ENCODE measurements at regions of chr19 and their contacts with region 1.

Region 1: DNA sequence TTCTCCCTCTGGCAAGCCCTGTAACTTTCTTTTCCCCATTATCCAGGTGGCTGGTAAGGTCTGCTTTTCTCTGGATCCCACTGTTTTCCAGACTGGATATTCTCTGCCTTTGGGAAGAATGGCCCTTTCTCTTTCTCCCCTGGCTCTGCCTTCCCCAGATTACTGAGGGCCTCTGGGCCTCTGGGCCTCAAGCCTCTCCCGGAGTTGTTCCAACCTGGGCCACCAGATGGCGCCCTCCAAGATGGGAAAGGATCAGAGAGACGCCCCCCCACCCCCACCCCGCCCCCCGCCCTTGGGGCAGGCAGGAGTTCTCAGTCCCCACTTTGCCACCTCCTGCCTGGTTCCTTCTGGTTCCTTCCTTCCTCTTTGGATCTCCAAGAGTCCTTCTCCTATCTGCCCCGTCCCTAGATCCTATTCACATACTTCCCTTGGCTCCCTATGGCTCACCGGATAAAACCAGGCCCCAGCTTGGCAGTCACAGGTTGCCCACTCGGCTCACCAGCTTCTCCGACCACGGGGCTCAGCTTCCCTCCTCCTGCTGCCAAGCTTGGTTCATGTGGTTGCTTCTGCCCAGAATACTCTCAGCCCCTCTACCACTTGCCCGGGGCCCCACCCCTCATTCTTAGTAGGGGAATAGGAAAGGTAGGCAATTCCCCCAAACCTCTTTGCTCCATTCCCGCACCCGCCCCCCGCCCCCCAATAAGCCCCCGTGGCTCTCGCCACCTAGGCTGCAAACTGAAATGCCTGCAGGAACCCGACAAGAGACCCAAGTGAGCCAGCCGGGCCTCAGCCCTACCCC is 13.1 kb downstream of the EPS8L1 start:
- DNase-seq: peak; percentile 64 to 79 (median 67)
- H3K4me3 ChIP-seq: no peak overlapping the region
- H3K27ac ChIP-seq: no peak overlapping the region
- H3K4me1 ChIP-seq: peaks cover 0 to 19% (median 8%) of the 10 kb centered on the region in 4 experiments
- H3K27me3 ChIP-seq: peaks cover 7 to 48% (median 32%) of the 10 kb centered on the region in 5 experiments

Region 2: DNA sequence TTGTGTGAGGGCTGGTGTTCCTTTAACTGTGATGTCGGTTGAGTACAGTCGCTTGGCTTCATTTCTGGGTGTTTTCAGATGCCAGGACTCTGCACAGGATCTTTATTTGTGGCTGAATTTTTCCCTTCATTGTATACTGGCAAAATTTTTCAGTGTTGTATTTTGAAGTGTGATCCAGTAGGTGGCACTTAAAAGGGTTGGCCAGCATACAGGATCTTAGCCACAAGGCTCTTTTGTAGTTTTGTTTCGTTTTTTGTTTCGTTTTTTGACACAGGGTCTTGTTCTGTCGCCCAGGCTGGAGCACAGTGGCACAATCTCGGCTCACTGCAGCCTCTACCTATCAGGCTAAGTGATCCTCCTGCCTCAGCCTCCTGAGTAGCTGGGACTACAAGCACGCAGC is 206.0 kb before region 1 on chr19:
- CTCF ChIA-PET with region 1: interaction called, 12 read pairs
- POLR2A ChIA-PET with region 1: no interaction called
- DNase-seq: peak; percentile 63 to 82 (median 78)
- H3K4me3 ChIP-seq: peak overlapping the region in 1 of 7 experiments; percentile 35
- H3K27ac ChIP-seq: no peak overlapping the region
- H3K4me1 ChIP-seq: peaks cover 0 to 7% (median 4%) of the 10 kb centered on the region in 4 experiments
- H3K27me3 ChIP-seq: peaks cover 0 to 10% (median 4%) of the 10 kb centered on the region in 5 experiments

Region 3: GRCh38 chr19:55067869-55068268 is 20.9 kb before region 1 on chr19:
- CTCF ChIA-PET with region 1: no interaction called
- POLR2A ChIA-PET with region 1: no interaction called
- DNase-seq: no peak
- H3K4me3 ChIP-seq: no peak overlapping the region
- H3K27ac ChIP-seq: no peak overlapping the region
- H3K4me1 ChIP-seq: peaks cover 0 to 8% (median 7%) of the 10 kb centered on the region in 4 experiments
- H3K27me3 ChIP-seq: peaks cover 6 to 69% (median 25%) of the 10 kb centered on the region in 5 experiments

Region 4: DNA sequence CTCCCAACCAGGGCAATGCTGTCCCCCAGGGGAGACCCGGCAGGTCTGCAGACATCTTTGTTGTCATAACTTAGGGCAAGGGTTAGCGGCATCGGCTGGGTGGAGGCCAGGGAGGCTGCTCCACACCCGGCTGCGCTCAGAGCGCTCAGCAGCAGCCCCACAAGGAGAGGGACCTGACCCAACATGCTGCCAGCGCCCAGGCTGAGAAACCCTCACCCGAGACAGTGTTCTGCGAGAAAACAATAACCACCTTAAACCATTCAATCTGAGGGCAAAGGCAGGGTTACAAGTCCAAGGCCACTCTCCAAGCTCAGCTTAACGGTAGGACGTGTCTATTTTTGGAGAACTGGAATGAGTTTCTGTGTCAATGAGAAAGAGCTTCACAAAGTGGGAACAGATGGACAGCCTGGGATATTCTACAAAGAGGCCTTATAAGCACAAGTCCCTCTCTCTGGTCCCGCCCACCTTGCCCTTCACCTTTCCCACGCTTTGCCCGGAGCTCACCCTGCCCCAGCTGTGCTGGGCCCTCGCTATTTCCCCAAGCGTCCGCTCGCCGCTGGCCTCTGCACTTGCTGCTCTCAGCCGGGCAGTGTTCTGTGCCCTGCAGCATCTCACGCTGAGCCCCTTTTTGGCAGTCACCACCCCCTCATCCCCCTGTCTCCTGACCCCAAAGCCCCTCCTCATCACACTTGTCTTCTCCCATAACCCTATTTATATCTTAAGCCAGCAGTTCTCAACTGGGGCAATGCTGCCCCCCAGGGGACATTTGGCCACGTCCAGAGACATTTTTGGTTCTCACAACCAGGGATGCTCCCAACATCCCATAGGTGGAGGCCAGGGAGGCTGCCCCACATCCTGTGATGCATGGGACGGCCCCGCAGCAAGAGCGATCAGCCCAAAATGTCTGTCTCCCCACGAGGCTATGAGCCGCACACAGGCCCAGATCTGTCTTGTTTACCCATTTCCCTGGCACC is 11.1 kb after region 1 on chr19:
- CTCF ChIA-PET with region 1: interaction called, 25 read pairs
- POLR2A ChIA-PET with region 1: interaction called, 3 read pairs
- DNase-seq: no peak
- H3K4me3 ChIP-seq: no peak overlapping the region
- H3K27ac ChIP-seq: no peak overlapping the region
- H3K4me1 ChIP-seq: peaks cover 0 to 17% (median 9%) of the 10 kb centered on the region in 4 experiments
- H3K27me3 ChIP-seq: no peaks in the 10 kb centered on the region

Region 5: GRCh38 chr19:55106591-55106990 is 17.8 kb after region 1 on chr19:
- CTCF ChIA-PET with region 1: interaction called, 25 read pairs
- POLR2A ChIA-PET with region 1: interaction called, 3 read pairs
- DNase-seq: no peak
- H3K4me3 ChIP-seq: no peak overlapping the region
- H3K27ac ChIP-seq: no peak overlapping the region
- H3K4me1 ChIP-seq: no peaks in the 10 kb centered on the region
- H3K27me3 ChIP-seq: no peaks in the 10 kb centered on the region